CD8-positive, alpha-beta T cell (primary cell): ENCODE measurements at regions of chr16 and their contacts with region 1.

Region 1: GRCh38 chr16:74480141-74481029 is 59.1 kb upstream of the CLEC18B start:
- DNase-seq: no peak
- ATAC-seq: no peak
- H3K4me3 ChIP-seq: no peak overlapping the region
- H3K4me3 Mint-ChIP-seq: no peak overlapping the region
- H3K27ac ChIP-seq: no peak overlapping the region
- H3K27ac Mint-ChIP-seq: no peak overlapping the region
- H3K4me1 ChIP-seq: no peaks in the 10 kb centered on the region
- H3K4me1 Mint-ChIP-seq: no peaks in the 10 kb centered on the region
- H3K27me3 ChIP-seq: no peaks in the 10 kb centered on the region
- H3K27me3 Mint-ChIP-seq: no peaks in the 10 kb centered on the region
- CTCF ChIP-seq: no peak

Region 2: GRCh38 chr16:74466872-74467271 is 13.5 kb before region 1 on chr16:
- CTCF ChIA-PET with region 1: interaction called, 3 read pairs
- POLR2A ChIA-PET with region 1: no interaction called
- intact Hi-C with region 1: loop called in 1 of 2 experiments (anchors 1 kb)
- DNase-seq: no peak
- ATAC-seq: peak; percentile 55
- H3K4me3 ChIP-seq: no peak overlapping the region
- H3K4me3 Mint-ChIP-seq: no peak overlapping the region
- H3K27ac ChIP-seq: peak overlapping the region in 1 of 2 experiments; percentile 8
- H3K27ac Mint-ChIP-seq: peak overlapping the region; percentile 79
- H3K4me1 ChIP-seq: peaks cover 4% of the 10 kb centered on the region
- H3K4me1 Mint-ChIP-seq: peaks cover 16% of the 10 kb centered on the region
- H3K27me3 ChIP-seq: no peaks in the 10 kb centered on the region
- H3K27me3 Mint-ChIP-seq: no peaks in the 10 kb centered on the region
- CTCF ChIP-seq: no peak

Region 3: GRCh38 chr16:74591876-74592614 is 111.7 kb after region 1 on chr16:
- CTCF ChIA-PET with region 1: no interaction called
- POLR2A ChIA-PET with region 1: no interaction called
- intact Hi-C with region 1: no loop called
- DNase-seq: no peak
- ATAC-seq: no peak
- H3K4me3 ChIP-seq: no peak overlapping the region
- H3K4me3 Mint-ChIP-seq: no peak overlapping the region
- H3K27ac ChIP-seq: no peak overlapping the region
- H3K27ac Mint-ChIP-seq: peak overlapping the region; percentile 14
- H3K4me1 ChIP-seq: peaks cover 37% of the 10 kb centered on the region
- H3K4me1 Mint-ChIP-seq: peaks cover 60% of the 10 kb centered on the region
- H3K27me3 ChIP-seq: no peaks in the 10 kb centered on the region
- H3K27me3 Mint-ChIP-seq: no peaks in the 10 kb centered on the region
- CTCF ChIP-seq: no peak